ENCODE measurements at regions of chr11 and their contacts with region 1.

Region 1: DNA sequence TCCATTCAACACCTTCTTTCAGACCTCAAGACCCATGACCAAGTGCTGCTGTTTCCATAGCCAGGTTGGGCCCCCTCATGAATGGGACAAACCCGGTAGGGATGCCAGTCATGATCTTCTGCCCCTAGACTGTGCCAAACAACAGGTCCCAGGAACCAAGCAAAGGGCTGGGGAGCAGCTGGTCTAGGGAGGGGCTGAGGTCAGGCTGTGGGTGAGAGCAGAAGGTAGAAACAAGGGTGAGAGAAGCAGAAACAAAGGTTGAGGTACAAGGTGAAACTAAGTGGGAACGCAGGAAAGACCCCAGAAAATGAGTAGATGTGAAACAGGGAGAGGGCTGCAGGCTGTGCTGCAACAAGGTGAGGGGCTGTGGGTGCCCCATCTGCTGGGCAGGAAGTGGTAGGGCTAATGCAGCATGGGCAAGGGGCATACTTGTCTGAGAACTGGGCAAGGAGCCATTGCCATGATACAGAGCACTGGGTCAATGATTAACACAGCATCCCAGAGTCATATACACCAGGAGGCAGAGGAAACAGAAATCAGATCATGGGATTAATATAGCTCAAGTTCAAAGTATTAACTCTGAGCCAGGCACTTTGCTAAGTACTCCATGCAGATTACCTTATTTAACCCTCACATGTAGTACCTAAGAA is 45.9 kb downstream of the SLC1A2 start:
- DNase-seq: no peak
- H3K4me3 ChIP-seq: no peak overlapping the region
- H3K27ac ChIP-seq: no peak overlapping the region
- H3K4me1 ChIP-seq: peaks cover 0 to 6% (median 0%) of the 10 kb centered on the region in 4 donors
- H3K27me3 ChIP-seq: no peaks in the 10 kb centered on the region
- CTCF ChIP-seq: no peak

Region 2: DNA sequence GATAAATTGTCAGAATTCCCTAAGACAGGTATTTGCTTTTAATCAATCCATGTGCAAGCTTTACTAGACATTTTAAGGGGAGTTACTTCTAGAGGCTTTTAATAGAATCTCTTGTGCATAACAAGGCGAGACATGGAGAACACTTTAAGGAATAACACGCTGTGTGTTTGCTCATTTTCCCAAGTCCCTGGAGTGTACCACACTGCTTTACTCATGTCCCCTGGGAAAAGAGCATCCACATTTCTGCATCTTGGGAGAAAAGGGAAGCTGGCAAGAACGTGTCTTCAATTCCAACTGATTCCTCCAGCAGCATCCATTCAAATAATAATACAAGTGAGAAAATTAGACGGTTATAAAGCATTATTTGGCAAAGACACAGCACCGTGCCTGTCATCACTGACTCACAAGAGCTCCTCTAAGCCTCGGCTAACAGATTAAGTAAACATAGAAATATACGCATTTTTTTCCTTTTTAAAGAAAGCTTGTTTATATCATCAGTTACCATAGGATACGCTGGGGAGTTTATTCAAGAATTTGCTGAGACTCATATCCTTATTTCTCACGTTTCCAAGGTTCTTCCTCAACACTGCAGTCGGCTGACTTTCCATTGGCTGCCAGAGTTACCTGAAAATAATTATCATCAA is 112.9 kb before region 1 on chr11:
- intact Hi-C with region 1: loop called (anchors 10 kb)
- DNase-seq: no peak
- H3K4me3 ChIP-seq: peak overlapping the region; percentile 7 to 11
- H3K27ac ChIP-seq: peak overlapping the region; percentile 36 to 56
- H3K4me1 ChIP-seq: peaks cover 0 to 31% (median 8%) of the 10 kb centered on the region in 4 donors
- H3K27me3 ChIP-seq: no peaks in the 10 kb centered on the region
- CTCF ChIP-seq: no peak

Region 3: DNA sequence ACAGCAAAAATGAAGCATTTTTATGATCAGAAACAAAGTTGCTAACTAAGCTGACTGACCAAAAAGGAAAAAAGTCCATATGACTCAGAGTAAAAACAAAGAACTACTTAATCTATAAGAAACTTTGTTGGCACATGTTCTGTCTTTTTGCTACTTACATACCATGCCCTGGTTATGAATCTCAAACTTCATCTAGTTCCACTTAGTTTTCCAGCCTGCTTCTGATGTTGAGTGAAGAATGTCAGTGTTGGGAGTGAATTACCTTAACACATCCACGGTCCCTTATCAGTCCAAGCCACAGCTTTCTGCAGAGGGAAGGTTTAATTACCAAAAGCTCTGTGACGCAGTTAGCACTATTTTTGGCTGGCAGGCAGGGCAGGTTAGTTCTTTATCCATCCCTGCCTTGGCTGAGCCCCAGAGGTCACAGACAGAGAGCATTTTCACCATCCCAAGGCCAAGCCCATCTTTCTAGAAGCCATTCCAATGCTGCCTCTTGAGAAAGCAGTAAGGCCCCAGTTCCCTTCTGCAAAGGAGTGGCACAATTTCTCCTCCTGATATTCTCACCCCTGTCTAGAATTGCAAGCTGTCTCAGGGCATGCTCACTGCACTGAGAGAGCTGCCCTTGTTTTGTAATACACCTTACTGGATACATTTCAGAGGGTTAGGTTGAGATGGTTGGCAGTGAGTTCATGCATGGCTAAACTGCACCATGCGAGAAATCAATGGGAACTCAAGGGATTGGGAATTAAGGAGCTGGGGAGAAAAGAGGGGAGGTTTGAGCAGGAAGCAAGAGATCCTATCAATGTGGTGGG is 21.1 kb before region 1 on chr11:
- intact Hi-C with region 1: no loop called
- DNase-seq: no peak
- H3K4me3 ChIP-seq: no peak overlapping the region
- H3K27ac ChIP-seq: no peak overlapping the region
- H3K4me1 ChIP-seq: peaks cover 0 to 4% (median 0%) of the 10 kb centered on the region in 4 donors
- H3K27me3 ChIP-seq: no peaks in the 10 kb centered on the region
- CTCF ChIP-seq: no peak